HEK293T (cell line): ENCODE measurements at regions of chr1 and their contacts with region 1.

Region 1: DNA sequence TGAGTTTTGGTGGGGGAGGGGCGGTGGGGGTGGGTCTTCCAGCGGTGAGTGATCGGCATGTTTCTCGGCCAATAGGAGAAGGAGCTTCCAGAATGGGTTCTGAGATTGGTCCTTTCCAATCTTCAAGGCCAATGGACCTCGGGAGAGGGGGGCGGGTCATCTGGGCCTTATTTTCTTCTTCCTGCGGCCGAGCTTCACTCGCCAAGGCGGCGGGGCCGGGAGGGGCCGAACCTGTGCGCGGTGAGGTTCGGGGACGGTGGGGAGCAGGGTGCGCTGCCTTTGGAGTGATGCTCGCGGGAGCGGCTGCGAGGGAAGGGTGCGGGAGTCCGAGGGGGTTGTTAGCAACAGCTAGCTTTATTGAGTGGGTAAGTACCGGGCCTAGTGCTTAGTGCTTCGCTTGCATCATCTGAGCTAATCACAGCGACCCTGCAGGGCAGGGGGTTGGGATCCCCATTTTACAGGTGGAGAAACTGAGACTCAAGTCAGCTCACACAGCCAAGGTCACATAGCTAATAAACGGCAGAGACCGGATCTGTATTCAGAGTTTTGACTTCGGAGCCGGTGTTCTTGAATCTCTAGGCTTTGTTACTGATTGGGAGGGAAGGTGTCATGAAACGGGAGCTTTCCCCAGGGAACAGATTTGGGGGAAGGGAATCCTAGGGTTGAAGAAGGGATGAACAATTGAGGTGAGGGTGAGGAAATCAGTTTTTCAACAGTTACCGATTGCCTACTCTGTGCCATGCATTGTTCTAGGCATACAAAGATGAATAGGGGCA is 549 bp downstream of the KDM4A start:
- DNase-seq: peak; percentile 97

Region 2: GRCh38 chr1:43529206-43529731 is 121.2 kb before region 1 on chr1:
- CTCF ChIA-PET with region 1: no interaction called
- POLR2A ChIA-PET with region 1: interaction called, 19 read pairs
- DNase-seq: peak; percentile 85

Region 3: DNA sequence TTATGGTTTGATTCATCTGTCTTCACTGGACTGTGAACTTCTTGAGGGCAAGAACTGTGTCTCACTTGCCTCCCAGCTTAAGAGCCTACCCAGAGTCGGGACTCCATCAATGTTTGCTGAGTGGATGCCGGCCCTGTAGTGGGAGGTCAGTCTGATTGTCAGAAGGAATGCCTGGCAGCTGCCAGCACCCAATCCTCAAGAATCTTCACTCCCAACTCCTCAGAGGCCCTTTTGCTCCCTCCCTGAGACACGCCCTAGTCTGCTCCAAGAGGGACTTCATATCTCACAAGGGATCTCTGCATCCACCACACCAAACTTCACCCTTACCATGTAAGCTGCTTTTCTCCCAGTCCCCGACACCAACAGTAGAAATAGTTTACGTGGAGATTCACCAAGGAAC is 15.8 kb before region 1 on chr1:
- CTCF ChIA-PET with region 1: interaction called, 4 read pairs
- POLR2A ChIA-PET with region 1: interaction called, 22 read pairs
- DNase-seq: no peak

Region 4: GRCh38 chr1:43639976-43640789 is 10.3 kb before region 1 on chr1:
- CTCF ChIA-PET with region 1: interaction called, 4 read pairs
- POLR2A ChIA-PET with region 1: interaction called, 22 read pairs
- DNase-seq: no peak

Region 5: GRCh38 chr1:43668956-43669355 is 18.5 kb after region 1 on chr1:
- CTCF ChIA-PET with region 1: no interaction called
- POLR2A ChIA-PET with region 1: interaction called, 29 read pairs
- DNase-seq: no peak

Region 6: DNA sequence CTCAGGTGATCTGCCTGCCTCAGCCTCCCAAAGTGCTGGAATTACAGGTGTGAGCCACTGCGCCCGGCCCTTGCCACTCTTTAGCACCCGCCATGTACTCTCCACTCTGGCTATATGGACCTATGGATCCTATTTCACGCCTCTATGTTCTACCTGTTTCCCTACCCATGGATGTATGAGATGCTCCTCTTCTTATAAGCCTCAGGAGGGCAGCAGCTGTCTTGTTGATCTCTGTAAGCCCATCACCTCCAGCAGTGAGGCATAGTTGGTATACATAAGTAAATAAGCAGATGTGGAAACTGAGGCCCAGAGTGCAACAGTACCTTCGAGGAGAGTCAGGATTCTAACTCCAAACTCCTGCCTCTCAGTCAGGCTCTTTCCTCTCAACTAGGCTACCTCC is 258.4 kb after region 1 on chr1:
- CTCF ChIA-PET with region 1: no interaction called
- POLR2A ChIA-PET with region 1: no interaction called
- DNase-seq: no peak